ENCODE measurements at regions of chr20 and their contacts with region 1.

Region 1: GRCh38 chr20:2093159-2093781 is 8.4 kb upstream of the STK35 start:
- DNase-seq: peak; percentile 51
- H3K4me3 Mint-ChIP-seq: no peak overlapping the region
- H3K27ac Mint-ChIP-seq: no peak overlapping the region
- H3K4me1 Mint-ChIP-seq: no peaks in the 10 kb centered on the region
- H3K27me3 Mint-ChIP-seq: peaks cover 56% of the 10 kb centered on the region
- CTCF ChIP-seq: peak; percentile 65

Region 2: GRCh38 chr20:1764136-1765033 is 328.9 kb before region 1 on chr20:
- CTCF ChIA-PET with region 1: interaction called, 35 read pairs
- POLR2A ChIA-PET with region 1: interaction called, 3 read pairs
- intact Hi-C with region 1: loop called (anchors 5 kb)
- DNase-seq: peak; percentile 84
- H3K4me3 Mint-ChIP-seq: no peak overlapping the region
- H3K27ac Mint-ChIP-seq: no peak overlapping the region
- H3K4me1 Mint-ChIP-seq: peaks cover 10% of the 10 kb centered on the region
- H3K27me3 Mint-ChIP-seq: no peaks in the 10 kb centered on the region
- CTCF ChIP-seq: peak; percentile 54

Region 3: GRCh38 chr20:1802385-1803060 is 290.7 kb before region 1 on chr20:
- CTCF ChIA-PET with region 1: interaction called, 9 read pairs
- POLR2A ChIA-PET with region 1: interaction called, 4 read pairs
- intact Hi-C with region 1: loop called (anchors 5 kb)
- DNase-seq: peak; percentile 45
- H3K4me3 Mint-ChIP-seq: no peak overlapping the region
- H3K27ac Mint-ChIP-seq: no peak overlapping the region
- H3K4me1 Mint-ChIP-seq: peaks cover 4% of the 10 kb centered on the region
- H3K27me3 Mint-ChIP-seq: no peaks in the 10 kb centered on the region
- CTCF ChIP-seq: peak; percentile 56

Region 4: GRCh38 chr20:1965520-1966351 is 127.5 kb before region 1 on chr20:
- CTCF ChIA-PET with region 1: interaction called, 42 read pairs
- POLR2A ChIA-PET with region 1: interaction called, 7 read pairs
- intact Hi-C with region 1: loop called (anchors 1 kb)
- DNase-seq: peak; percentile 73
- H3K4me3 Mint-ChIP-seq: no peak overlapping the region
- H3K27ac Mint-ChIP-seq: no peak overlapping the region
- H3K4me1 Mint-ChIP-seq: no peaks in the 10 kb centered on the region
- H3K27me3 Mint-ChIP-seq: peaks cover 58% of the 10 kb centered on the region
- CTCF ChIP-seq: peak; percentile 94

Region 5: DNA sequence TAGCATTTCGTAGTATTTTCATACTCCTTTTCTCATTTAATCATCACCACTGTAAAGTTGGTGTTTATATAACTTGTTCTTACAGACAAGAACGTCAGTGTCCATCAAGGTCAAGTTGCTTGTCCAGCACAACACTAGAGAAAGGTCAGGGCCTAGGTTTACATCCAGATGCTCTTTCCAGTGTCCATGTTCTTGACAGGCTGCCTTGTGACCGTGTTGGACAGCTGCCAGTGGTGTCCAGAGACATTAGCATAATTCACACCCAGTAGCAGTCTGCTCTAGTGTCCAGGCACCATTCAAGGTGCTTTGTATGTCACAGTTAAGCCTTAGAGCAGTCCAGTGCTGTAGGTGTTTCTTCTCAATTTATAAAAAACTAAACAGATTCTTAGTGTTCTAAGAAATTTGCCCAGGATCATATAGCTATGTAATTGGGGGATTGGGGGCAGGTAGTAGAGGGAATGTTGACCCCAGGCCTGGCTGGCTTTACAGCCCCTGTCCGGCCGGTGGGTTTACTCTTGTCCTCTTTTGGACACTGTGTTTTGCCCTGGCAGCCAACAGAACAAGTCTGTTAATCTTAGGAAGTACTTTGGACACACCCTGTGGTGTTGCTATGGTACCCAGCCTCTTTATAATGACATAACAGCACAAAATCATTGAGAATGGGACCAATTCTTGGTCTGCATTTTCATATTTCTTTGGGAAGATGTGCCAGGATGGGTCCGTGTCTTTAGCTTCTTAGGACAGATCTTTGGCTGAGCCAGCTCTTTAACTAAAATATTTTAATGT is 16.3 kb after region 1 on chr20:
- CTCF ChIA-PET with region 1: interaction called, 27 read pairs
- POLR2A ChIA-PET with region 1: interaction called, 39 read pairs
- intact Hi-C with region 1: no loop called
- DNase-seq: peak; percentile 36
- H3K4me3 Mint-ChIP-seq: peak overlapping the region; percentile 0
- H3K27ac Mint-ChIP-seq: peak overlapping the region; percentile 10
- H3K4me1 Mint-ChIP-seq: peaks cover 48% of the 10 kb centered on the region
- H3K27me3 Mint-ChIP-seq: no peaks in the 10 kb centered on the region
- CTCF ChIP-seq: no peak

Measured in MCF 10A (cell line).